ENCODE measurements at regions of chr12 and their contacts with region 1.

Region 1: DNA sequence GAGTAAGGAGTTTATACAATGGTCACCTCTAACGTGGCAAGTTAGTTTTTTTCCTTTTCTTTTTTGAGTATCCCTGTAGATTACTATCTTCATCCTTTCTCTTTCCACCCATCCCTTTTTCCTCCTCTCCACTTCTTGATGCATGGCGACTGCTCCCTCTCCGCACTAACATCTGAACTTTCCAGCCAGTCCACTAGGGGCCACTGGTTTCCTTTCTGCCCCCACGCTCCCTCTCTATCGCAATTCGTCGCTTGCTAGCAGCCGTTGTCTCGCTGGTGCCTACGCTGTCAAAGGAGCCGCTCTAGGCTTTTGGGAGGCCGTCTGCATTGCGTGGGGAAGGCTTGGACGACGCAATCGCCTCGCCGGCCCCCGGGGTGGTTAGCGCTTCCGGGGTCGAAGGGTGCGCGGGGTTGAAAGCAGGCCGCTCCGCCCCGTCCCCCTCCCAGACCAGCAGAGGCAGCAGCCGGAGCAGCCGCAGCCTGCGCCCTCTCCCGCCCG is at the start of gene PCBP2:
- DNase-seq: peak; percentile 99
- ATAC-seq: peak; percentile 98
- H3K4me3 ChIP-seq: peak within 1 kb of the TSS; percentile 95
- H3K27ac ChIP-seq: peak within 1 kb of the TSS; percentile 79
- H3K4me1 ChIP-seq: peaks cover 12% of the 10 kb centered on the region
- H3K27me3 ChIP-seq: no peaks in the 10 kb centered on the region
- CTCF ChIP-seq: peak; percentile 84
- total RNA-seq, gene PCBP2: 204 and 306 TPM in 2 replicates

Region 2: DNA sequence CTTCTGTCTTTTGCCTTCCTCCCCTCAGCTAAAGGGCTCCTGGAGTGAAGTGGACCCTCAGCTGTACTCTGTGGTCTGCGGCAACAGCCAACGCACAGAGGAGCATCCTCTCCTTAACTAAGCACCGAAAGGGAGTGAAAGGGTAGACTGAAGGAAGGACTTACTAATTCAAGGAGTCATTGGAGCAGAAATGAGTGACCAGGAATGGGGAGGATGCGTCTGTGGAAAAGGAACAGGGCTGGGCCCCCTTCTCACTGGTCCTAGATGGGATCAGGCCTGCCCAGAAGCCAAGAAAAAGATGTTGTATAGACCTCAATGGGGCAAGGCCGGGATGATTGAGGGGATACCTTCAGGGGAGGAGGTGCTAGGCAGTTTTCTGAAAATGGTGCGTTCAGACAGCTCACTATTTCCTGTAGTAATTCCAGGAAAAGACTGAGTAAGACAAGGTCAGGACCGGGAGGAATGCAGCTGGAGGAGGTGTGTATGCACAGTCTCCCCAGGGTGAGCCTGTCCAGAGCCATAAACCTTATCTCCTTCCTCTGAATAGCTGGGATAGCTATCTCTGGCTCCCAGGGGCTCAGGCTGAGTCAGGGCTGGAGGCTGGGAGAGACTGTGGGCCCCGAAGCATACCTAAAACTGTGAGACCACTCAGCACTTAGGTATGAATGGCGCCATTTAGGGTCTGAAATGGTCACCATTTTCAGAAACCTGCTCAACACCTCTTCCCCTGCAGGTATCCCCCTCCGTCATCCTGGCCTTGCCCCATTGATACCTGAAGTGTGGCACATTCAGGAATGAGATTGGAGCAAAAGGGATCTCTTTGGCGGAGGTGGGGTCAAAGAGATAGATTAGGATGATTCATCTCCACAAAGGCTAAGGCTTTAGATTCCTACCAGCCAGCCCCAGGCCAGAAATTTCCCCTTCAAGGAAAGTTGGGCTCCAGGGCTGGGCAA is 526.7 kb before region 1 on chr12:
- CTCF ChIA-PET with region 1: no interaction called
- POLR2A ChIA-PET with region 1: no interaction called
- intact Hi-C with region 1: no loop called
- DNase-seq: peak; percentile 89
- ATAC-seq: peak; percentile 52
- H3K4me3 ChIP-seq: peak overlapping the region; percentile 47
- H3K27ac ChIP-seq: peak overlapping the region; percentile 98
- H3K4me1 ChIP-seq: peaks cover 38% of the 10 kb centered on the region
- H3K27me3 ChIP-seq: no peaks in the 10 kb centered on the region
- CTCF ChIP-seq: no peak

Region 3: DNA sequence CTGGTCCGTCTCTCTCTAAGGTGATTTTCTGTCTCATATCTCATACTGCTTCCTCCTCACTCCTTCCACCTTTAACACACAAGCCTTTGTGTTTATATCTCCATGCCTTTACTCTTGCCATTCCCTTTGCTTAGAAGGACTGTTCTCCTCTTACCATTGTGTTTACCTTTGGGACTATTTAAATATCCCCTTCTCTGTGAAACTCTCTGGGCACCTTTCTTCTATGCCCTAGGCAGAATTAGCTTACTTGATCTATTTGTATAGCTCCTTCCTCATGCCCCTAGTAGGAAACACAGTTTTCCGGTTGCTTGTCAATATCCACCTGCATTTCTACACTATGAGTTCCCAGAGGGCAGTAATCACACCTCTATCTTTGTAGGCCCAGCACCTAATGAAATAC is 31.9 kb before region 1 on chr12:
- CTCF ChIA-PET with region 1: interaction called, 4 read pairs
- POLR2A ChIA-PET with region 1: interaction called, 4 read pairs
- intact Hi-C with region 1: loop called (anchors 2 kb)
- DNase-seq: peak; percentile 14
- ATAC-seq: no peak; the same call in 1 of the 2 replicates
- H3K4me3 ChIP-seq: no peak overlapping the region
- H3K27ac ChIP-seq: no peak overlapping the region
- H3K4me1 ChIP-seq: peaks cover 14% of the 10 kb centered on the region
- H3K27me3 ChIP-seq: no peaks in the 10 kb centered on the region
- CTCF ChIP-seq: no peak

Region 4: DNA sequence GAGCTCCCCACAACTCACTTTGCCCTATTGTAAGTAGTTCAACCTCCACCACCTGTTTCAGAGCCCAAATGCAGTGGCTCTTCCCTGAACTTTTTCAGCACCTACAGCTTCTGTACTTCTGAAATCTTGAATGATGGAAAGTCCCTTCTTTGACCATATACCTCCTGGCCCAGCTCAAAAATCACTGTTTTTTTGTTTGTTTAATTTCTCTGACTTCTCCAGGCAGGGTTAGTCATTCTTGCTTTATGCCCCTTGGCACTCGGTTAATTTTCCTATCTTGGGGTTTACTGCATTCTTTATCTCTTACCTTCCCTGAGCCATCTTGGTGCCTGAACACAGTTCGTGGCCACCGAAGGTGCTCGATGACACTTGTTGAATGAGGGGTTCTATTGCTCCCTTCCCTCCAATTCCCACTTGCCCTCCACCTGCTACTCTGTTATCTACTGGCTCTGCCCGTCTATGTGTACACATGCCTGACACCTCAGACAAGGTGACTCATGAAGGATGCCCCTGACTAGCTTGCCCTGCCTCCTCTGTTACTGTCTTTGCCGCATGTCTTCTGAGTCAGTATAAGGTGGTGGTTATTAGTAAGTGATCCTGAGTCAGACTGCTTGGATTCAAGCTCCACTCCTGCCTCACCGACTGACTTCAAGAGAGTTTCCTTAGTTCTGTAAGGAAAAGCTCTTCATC is 23.7 kb before region 1 on chr12:
- CTCF ChIA-PET with region 1: interaction called, 3 read pairs
- POLR2A ChIA-PET with region 1: no interaction called
- intact Hi-C with region 1: loop called (anchors 1 kb)
- DNase-seq: peak; percentile 97
- ATAC-seq: peak; percentile 95
- H3K4me3 ChIP-seq: peak overlapping the region; percentile 23; the same call in 1 of the 2 replicates
- H3K27ac ChIP-seq: peak overlapping the region; percentile 90
- H3K4me1 ChIP-seq: peaks cover 44% of the 10 kb centered on the region
- H3K27me3 ChIP-seq: no peaks in the 10 kb centered on the region
- CTCF ChIP-seq: no peak

Region 5: DNA sequence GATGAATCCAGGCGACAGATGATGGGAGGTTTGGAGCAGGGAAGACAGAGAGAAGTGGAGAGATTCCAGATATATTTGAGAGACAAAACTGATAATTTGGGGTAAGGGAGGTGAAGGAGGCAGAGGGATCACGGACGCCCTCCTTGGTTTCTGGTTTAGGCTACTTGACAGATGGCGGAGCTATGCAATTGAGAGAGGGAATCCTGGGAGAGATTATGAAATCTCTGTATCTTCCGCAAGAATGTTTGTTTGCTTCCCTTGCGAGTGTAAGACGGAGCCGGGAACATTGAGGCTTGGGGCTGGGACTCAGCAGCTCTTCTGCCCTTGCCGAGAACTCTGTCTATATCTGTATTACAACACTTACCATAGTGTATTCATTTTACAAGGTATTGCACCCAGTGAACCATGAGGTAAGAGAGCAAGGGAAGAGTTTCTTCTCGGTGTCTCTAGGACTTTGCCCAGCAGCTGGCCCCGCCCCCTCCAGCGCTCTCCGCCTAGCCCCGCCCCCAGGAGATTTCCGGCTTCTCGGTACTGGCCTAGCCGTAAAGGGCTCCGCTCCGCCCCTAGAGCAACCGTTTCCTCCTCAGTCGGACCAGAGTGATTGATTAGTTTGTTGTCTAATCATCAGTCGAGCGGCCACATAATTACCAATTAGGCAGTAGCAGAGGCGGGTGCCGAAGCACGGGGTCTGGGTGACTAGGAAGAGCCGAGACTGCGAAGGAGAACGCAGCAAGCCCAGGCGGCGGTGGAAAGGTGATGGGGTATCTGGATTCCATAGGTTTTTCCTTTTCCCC is 10.5 kb before region 1 on chr12 and contains the start of gene PRR13:
- CTCF ChIA-PET with region 1: no interaction called
- POLR2A ChIA-PET with region 1: no interaction called
- intact Hi-C with region 1: loop called (anchors 1 kb)
- DNase-seq: peak; percentile 99
- ATAC-seq: peak; percentile 97
- H3K4me3 ChIP-seq: peak within 1 kb of the TSS; percentile 78
- H3K27ac ChIP-seq: peak within 1 kb of the TSS; percentile 34
- H3K4me1 ChIP-seq: peaks cover 12% of the 10 kb centered on the region; the same call in 1 of the 2 replicates
- H3K27me3 ChIP-seq: no peaks in the 10 kb centered on the region
- CTCF ChIP-seq: no peak
- total RNA-seq, gene PRR13: 54.2 and 60.9 TPM in 2 replicates

Measured in PC-3 (cell line).